ENCODE measurements at regions of chr4 and their contacts with region 1.

Region 1: DNA sequence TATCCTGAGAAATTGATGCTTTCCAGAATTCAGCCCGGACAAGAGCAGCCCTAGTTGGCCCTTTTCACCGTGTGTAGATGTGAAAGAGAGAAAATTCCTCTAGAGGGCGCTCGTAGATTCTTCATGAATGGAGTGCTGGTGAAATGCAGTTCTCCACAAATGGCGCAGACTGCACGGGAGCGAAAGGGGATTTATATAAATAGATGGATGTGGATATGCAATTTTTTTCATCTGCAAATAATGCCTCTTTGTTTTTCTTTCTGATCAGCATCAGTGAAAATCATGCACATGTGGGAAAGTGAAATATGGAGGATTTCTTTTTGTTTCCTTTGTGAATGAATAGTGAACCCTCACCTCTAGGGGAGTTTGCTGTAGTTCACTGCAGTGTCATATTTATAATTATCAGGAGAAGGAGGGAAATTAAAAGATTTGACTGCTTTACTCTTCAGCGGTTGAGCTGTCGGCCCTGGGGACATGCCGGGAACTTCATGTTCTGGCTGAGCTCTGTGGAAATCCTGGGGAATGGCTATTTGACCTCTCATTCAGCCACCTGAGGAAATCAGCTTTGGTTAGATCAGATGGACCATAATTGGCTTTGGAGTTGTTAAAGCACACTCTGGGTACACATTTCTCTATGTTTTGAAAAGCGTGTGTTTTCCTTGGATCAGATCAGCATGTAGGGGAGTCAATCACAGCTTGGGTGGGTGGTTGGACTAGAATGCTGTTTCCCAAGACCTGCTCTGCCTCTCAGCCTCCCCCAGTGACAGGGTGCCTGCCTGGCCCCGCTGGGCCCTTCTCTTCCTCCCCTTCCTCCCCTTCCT is 115.0 kb upstream of the SHISA3 start:
- DNase-seq: peak; percentile 86
- H3K4me3 Mint-ChIP-seq: no peak overlapping the region
- H3K27ac Mint-ChIP-seq: no peak overlapping the region
- H3K4me1 Mint-ChIP-seq: no peaks in the 10 kb centered on the region
- H3K27me3 Mint-ChIP-seq: no peaks in the 10 kb centered on the region
- CTCF ChIP-seq: peak; percentile 82

Region 2: GRCh38 chr4:41990365-41991111 is 291.8 kb before region 1 on chr4 and contains the start of gene SLC30A9:
- CTCF ChIA-PET with region 1: interaction called, 3 read pairs
- POLR2A ChIA-PET with region 1: no interaction called
- intact Hi-C with region 1: loop called (anchors 10 kb)
- DNase-seq: peak; percentile 95
- H3K4me3 Mint-ChIP-seq: peak within 1 kb of the TSS; percentile 97
- H3K27ac Mint-ChIP-seq: peak within 1 kb of the TSS; percentile 93
- H3K4me1 Mint-ChIP-seq: peaks cover 6% of the 10 kb centered on the region
- H3K27me3 Mint-ChIP-seq: no peaks in the 10 kb centered on the region
- CTCF ChIP-seq: peak; percentile 14
- total RNA-seq, gene SLC30A9: 58.5 and 64.9 TPM in 2 replicates

Region 3: GRCh38 chr4:42302348-42302747 is 20.1 kb after region 1 on chr4:
- CTCF ChIA-PET with region 1: interaction called, 10 read pairs
- POLR2A ChIA-PET with region 1: interaction called, 3 read pairs
- intact Hi-C with region 1: no loop called
- DNase-seq: peak; percentile 69
- H3K4me3 Mint-ChIP-seq: no peak overlapping the region
- H3K27ac Mint-ChIP-seq: no peak overlapping the region
- H3K4me1 Mint-ChIP-seq: no peaks in the 10 kb centered on the region
- H3K27me3 Mint-ChIP-seq: no peaks in the 10 kb centered on the region
- CTCF ChIP-seq: no peak

Region 4: GRCh38 chr4:42371306-42372252 is 89.3 kb after region 1 on chr4:
- CTCF ChIA-PET with region 1: interaction called, 26 read pairs
- POLR2A ChIA-PET with region 1: interaction called, 4 read pairs
- intact Hi-C with region 1: loop called (anchors 2 kb)
- DNase-seq: peak; percentile 59
- H3K4me3 Mint-ChIP-seq: no peak overlapping the region
- H3K27ac Mint-ChIP-seq: no peak overlapping the region
- H3K4me1 Mint-ChIP-seq: no peaks in the 10 kb centered on the region
- H3K27me3 Mint-ChIP-seq: no peaks in the 10 kb centered on the region
- CTCF ChIP-seq: peak; percentile 46

Region 5: DNA sequence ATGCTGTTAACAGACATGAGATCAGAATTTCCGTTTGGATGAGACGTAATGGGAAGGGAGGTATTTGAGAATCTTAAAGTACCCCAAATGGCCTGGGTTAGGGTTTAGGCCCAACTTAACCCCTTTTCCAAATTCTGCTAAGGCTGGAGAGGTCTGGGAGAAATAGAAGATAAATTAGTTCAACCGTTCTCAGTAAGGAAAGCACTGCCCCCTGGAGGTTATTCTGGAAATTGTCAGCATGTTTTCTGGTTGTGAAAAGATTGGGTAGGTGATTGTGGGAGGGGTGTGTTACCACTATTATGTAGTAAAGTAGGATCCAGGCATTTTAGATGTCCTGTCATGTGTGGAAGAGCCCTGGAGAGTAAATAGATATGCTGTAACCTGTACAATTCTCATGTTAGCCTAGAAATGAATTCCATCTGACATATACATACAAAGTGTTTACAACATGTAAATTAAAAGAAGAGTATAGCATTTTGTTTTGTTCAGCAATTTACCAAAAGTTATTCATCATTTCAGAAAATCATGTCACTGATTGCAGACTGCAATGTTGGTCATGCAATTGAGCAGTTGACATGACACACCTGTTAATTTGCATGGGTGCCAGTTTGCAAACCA is 583.4 kb after region 1 on chr4:
- CTCF ChIA-PET with region 1: interaction called, 3 read pairs
- POLR2A ChIA-PET with region 1: no interaction called
- intact Hi-C with region 1: loop called (anchors 10 kb)
- DNase-seq: peak; percentile 77
- H3K4me3 Mint-ChIP-seq: no peak overlapping the region
- H3K27ac Mint-ChIP-seq: no peak overlapping the region
- H3K4me1 Mint-ChIP-seq: no peaks in the 10 kb centered on the region
- H3K27me3 Mint-ChIP-seq: peaks cover 14% of the 10 kb centered on the region
- CTCF ChIP-seq: peak; percentile 44

Measured in MCF 10A (cell line).